Left cardiac atrium (tissue), 4 donors: ENCODE measurements at regions of chr12 and their contacts with region 1.

Region 1: GRCh38 chr12:132414634-132415326 is 75.2 kb upstream of the FBRSL1 start:
- DNase-seq: peak; percentile 82
- ATAC-seq: peak; percentile 96 to 97

Region 2: DNA sequence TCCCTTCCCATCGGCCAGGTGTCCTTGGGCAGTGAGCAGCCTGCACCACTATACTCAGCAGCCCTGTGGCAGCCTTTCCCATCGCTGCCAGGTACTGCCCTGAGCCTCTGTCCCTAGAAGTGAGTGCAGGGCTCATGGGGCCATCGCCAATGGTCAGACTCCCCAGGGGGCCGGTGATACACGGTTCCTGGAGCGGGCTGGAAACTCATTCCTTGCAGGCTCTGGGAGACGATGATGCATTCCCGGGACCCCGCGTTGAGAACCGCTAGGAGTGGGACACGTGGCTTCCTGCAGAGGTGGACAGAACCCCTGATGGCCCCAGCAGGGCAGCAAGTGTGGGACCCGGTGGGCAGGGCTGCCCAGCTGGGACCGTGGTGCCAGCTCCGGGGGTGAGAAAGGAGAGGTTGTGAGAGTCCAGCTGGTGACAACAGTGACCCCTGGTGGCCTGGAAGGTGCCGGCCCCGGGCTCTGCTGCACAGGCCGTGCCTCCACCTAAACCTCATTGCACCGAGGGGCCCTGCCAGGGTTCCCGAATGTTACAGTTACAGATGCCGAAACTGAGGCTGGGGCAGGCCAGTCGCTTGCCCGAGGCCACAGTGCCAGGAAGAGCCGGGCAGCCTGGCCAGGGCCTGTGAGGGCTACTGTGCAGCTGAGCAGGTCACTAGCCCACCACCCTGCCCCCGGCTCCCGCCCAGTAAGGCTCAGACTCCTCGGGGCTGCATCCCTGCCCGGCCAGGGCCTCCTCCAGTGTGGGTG is 109.0 kb after region 1 on chr12:
- intact Hi-C with region 1: loop called (anchors 5 kb)
- DNase-seq: peak; percentile 74
- ATAC-seq: peak; percentile 65 to 73

Region 3: DNA sequence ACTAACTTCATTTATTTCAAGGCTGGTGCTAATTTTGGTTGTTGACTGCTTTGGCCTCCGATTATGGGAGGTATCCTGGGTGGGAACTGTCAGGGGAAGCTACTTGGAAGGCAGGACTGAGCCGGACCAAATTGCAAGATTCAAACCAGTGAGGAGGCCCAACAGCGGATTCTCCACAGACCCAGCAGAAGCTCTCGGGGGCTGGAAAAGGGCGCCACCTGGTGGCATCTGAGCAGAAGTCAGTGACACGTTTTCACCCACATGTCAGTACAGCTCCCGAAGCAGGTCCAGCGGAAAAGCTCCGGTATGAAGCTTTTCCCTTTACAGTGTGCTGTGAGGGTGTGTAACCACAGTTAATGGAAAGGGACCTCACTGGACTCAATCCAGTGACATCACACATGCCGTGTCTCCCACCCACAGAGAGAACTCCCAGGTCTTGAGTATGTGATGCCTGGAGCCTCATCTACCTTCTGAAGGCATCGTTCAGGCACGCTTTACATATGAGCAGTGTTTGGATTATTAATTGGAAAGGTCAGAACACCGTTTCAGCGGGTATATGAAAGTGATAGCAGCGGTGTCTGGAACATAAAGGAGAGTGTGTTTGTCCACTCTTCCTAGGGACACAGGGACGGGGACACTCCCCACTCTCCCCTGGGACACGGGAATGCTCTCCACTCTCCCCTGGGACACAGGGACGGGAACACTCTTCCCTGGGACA is 200.2 kb after region 1 on chr12:
- intact Hi-C with region 1: loop called (anchors 1 to 5 kb)
- DNase-seq: peak; percentile 87
- ATAC-seq: peak; percentile 87 to 90